Gastrocnemius medialis (tissue), 4 donors: ENCODE measurements at regions of chr2 and their contacts with region 1.

Region 1: DNA sequence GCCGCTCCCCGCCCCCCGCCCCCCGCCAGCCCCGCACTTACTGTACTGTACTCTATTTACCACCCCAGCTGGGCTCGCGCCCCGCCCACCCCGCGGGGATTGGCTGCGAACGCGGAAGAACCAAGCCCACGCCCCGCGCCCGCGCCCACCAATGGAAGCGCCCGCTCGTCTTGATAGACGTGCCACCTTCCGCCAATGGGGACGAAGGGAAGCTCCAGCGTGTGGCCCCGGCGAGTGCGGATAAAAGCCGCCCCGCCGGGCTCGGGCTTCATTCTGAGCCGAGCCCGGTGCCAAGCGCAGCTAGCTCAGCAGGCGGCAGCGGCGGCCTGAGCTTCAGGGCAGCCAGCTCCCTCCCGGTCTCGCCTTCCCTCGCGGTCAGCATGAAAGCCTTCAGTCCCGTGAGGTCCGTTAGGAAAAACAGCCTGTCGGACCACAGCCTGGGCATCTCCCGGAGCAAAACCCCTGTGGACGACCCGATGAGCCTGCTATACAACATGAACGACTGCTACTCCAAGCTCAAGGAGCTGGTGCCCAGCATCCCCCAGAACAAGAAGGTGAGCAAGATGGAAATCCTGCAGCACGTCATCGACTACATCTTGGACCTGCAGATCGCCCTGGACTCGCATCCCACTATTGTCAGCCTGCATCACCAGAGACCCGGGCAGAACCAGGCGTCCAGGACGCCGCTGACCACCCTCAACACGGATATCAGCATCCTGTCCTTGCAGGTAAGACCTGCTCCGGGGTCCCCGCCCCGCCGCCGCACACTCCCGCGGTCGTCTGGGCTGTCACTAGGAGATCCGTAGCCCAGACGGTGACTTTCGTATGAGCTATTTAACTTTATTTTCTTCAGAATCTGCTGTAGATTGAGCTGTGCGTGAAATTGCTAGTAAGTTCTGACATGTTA is at the start of gene ID2:
- DNase-seq: peak; percentile 97 to 99
- ATAC-seq: peak; percentile 62 to 71
- H3K4me3 ChIP-seq: peak within 1 kb of the TSS; percentile 60 to 75 (median 72)
- H3K27ac ChIP-seq: peak within 1 kb of the TSS; percentile 92 to 99 (median 98)
- H3K4me1 ChIP-seq: peaks cover 32 to 43% of the 10 kb centered on the region in 2 donors
- H3K27me3 ChIP-seq: no peaks in the 10 kb centered on the region
- CTCF ChIP-seq: no peak
- POLR2A ChIP-seq: peak; percentile 97 to 99
- total RNA-seq, gene ID2: 16.6 to 35.9 (median 27.4) TPM

Region 2: GRCh38 chr2:7427293-7428060 is 1254.6 kb before region 1 on chr2:
- in situ Hi-C with region 1: loop called (anchors 5 to 10 kb)
- intact Hi-C with region 1: no loop called
- DNase-seq: no peak
- ATAC-seq: peak; percentile 26 to 39
- H3K4me3 ChIP-seq: no peak overlapping the region
- H3K27ac ChIP-seq: no peak overlapping the region
- H3K4me1 ChIP-seq: no peaks in the 10 kb centered on the region
- H3K27me3 ChIP-seq: peaks cover 7 to 23% (median 19%) of the 10 kb centered on the region in 3 donors
- CTCF ChIP-seq: peak; percentile 38 to 63 (median 52)
- POLR2A ChIP-seq: no peak

Region 3: GRCh38 chr2:8215159-8215863 is 466.7 kb before region 1 on chr2:
- in situ Hi-C with region 1: no loop called
- intact Hi-C with region 1: loop called (anchors 5 kb)
- DNase-seq: no peak
- ATAC-seq: no peak
- H3K4me3 ChIP-seq: no peak overlapping the region
- H3K27ac ChIP-seq: no peak overlapping the region
- H3K4me1 ChIP-seq: peaks cover 3 to 7% of the 10 kb centered on the region in 2 donors
- H3K27me3 ChIP-seq: no peaks in the 10 kb centered on the region
- CTCF ChIP-seq: no peak
- POLR2A ChIP-seq: no peak

Region 4: GRCh38 chr2:8525582-8526402 is 156.2 kb before region 1 on chr2:
- in situ Hi-C with region 1: no loop called
- intact Hi-C with region 1: loop called (anchors 5 kb)
- DNase-seq: peak; percentile 44 to 69
- ATAC-seq: peak; percentile 52 to 63
- H3K4me3 ChIP-seq: no peak overlapping the region
- H3K27ac ChIP-seq: no peak overlapping the region
- H3K4me1 ChIP-seq: peaks cover 9 to 10% of the 10 kb centered on the region in 2 donors
- H3K27me3 ChIP-seq: no peaks in the 10 kb centered on the region
- CTCF ChIP-seq: peak in 2 of 5 experiments; percentile 13 to 26
- POLR2A ChIP-seq: no peak

Region 5: DNA sequence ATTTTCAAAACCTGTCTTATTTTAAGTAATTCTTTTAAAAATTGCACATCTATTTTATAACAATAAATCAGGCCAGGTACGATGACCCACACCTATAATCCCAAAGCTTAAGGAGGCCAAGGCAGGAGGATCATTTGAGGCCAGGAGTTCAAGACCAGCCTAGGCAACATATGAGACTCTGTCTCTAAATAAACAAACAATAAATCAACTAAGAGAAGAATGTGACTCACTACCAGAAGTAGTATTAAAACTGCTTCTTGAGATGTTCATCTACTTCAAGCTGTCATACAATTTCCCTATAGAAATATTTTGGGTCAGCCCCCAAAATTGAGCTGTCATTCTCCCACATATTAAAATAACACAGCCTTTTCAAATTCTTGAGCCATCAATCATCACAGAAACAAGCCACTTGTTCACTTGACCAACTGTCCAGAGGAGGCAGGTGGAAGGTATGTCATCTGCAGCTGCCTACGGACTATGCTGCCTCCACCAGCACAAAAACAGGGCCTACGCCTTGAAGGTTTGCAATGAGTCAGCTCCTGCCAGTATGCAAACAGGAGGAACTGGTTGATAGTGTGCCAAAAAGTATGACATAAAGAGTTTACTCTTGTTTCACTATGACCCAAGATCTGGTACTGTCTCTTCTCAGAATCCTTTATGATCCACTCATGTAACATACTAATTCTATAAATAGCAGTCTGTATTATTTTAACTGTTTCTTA is 121.8 kb after region 1 on chr2:
- in situ Hi-C with region 1: no loop called
- intact Hi-C with region 1: loop called (anchors 2 kb)
- DNase-seq: peak; percentile 84 to 92
- ATAC-seq: peak; percentile 98
- H3K4me3 ChIP-seq: no peak overlapping the region
- H3K27ac ChIP-seq: peak overlapping the region; percentile 82 to 90 (median 88)
- H3K4me1 ChIP-seq: peaks cover 28 to 31% of the 10 kb centered on the region in 2 donors
- H3K27me3 ChIP-seq: no peaks in the 10 kb centered on the region
- CTCF ChIP-seq: peak in 3 of 5 experiments; percentile 11 to 31 (median 28)
- POLR2A ChIP-seq: no peak

Region 6: GRCh38 chr2:8986327-8986976 is 304.4 kb after region 1 on chr2:
- in situ Hi-C with region 1: no loop called
- intact Hi-C with region 1: no loop called
- DNase-seq: no peak
- ATAC-seq: no peak
- H3K4me3 ChIP-seq: no peak overlapping the region
- H3K27ac ChIP-seq: no peak overlapping the region
- H3K4me1 ChIP-seq: no peaks in the 10 kb centered on the region
- H3K27me3 ChIP-seq: no peaks in the 10 kb centered on the region
- CTCF ChIP-seq: no peak
- POLR2A ChIP-seq: no peak